ENCODE measurements at regions of chrX and their contacts with region 1.

Region 1: GRCh38 chrX:37926700-37927099 is 79.3 kb upstream of the DYNLT3 start:
- DNase-seq: no peak
- H3K4me3 ChIP-seq: no peak overlapping the region
- H3K27ac ChIP-seq: no peak overlapping the region
- H3K4me1 ChIP-seq: no peaks in the 10 kb centered on the region
- H3K27me3 ChIP-seq: no peaks in the 10 kb centered on the region
- CTCF ChIP-seq: peak in 2 of 3 donors; percentile 18 to 43
- EP300 ChIP-seq: no peak
- POLR2A ChIP-seq: no peak

Region 2: DNA sequence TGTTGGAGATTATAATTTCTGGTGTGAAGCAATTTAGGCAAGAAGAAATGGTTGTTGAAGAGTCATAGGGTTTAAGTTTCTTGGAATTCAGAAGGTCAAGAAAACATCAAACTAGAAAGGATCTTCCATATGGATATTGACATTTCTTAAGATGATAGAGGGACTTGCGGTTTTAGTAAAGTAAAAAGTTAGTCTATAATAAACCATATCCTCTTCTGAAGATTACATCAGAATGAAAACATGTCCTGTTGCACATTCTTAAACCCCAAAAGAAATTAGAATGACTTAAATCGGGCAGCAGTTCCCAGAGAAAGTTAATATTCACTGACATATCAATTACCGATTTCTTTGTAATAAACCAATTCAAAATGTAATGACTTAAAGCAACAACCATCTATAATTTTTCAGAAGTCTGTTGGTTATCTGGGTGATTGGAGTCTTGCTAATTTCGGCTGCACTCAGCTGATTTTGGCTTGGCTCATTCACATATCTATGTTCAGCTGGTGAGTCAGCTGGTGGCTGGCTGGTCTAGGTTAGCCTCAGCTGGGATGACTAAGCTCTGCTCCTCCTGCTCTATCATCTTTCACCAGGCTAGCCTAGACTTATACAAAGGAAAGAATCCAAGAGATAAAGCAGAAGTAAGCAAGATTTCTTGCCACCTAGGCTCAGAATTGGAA is 54.9 kb before region 1 on chrX:
- intact Hi-C with region 1: loop called in 1 of 4 experiments (anchors 10 kb)
- DNase-seq: no peak
- H3K4me3 ChIP-seq: no peak overlapping the region
- H3K27ac ChIP-seq: no peak overlapping the region
- H3K4me1 ChIP-seq: no peaks in the 10 kb centered on the region
- H3K27me3 ChIP-seq: no peaks in the 10 kb centered on the region
- CTCF ChIP-seq: no peak
- EP300 ChIP-seq: no peak
- POLR2A ChIP-seq: no peak

Region 3: GRCh38 chrX:38166478-38167083 is 239.9 kb after region 1 on chrX:
- intact Hi-C with region 1: loop called in 2 of 4 experiments (anchors 5 to 10 kb)
- DNase-seq: no peak
- H3K4me3 ChIP-seq: no peak overlapping the region
- H3K27ac ChIP-seq: no peak overlapping the region
- H3K4me1 ChIP-seq: no peaks in the 10 kb centered on the region
- H3K27me3 ChIP-seq: no peaks in the 10 kb centered on the region
- CTCF ChIP-seq: no peak
- EP300 ChIP-seq: no peak
- POLR2A ChIP-seq: no peak

Region 4: GRCh38 chrX:38175140-38175539 is 248.4 kb after region 1 on chrX:
- intact Hi-C with region 1: loop called in 1 of 4 experiments (anchors 10 kb)
- DNase-seq: peak in 3 of 5 donors; percentile 15 to 42 (median 24)
- H3K4me3 ChIP-seq: no peak overlapping the region
- H3K27ac ChIP-seq: no peak overlapping the region
- H3K4me1 ChIP-seq: no peaks in the 10 kb centered on the region
- H3K27me3 ChIP-seq: no peaks in the 10 kb centered on the region
- CTCF ChIP-seq: peak in 1 of 3 donors; percentile 23
- EP300 ChIP-seq: no peak
- POLR2A ChIP-seq: no peak